RWPE1 (cell line): ENCODE measurements at regions of chr17 and their contacts with region 1.

Region 1: GRCh38 chr17:31130286-31131224 is 35.8 kb downstream of the NF1 start:
- DNase-seq: no peak
- H3K27ac ChIP-seq: peak overlapping the region; percentile 40
- CTCF ChIP-seq: no peak

Region 2: GRCh38 chr17:31085563-31085962 is 45.0 kb before region 1 on chr17:
- CTCF ChIA-PET with region 1: no interaction called
- POLR2A ChIA-PET with region 1: interaction called, 10 read pairs
- DNase-seq: no peak
- H3K27ac ChIP-seq: no peak overlapping the region
- CTCF ChIP-seq: no peak

Region 3: DNA sequence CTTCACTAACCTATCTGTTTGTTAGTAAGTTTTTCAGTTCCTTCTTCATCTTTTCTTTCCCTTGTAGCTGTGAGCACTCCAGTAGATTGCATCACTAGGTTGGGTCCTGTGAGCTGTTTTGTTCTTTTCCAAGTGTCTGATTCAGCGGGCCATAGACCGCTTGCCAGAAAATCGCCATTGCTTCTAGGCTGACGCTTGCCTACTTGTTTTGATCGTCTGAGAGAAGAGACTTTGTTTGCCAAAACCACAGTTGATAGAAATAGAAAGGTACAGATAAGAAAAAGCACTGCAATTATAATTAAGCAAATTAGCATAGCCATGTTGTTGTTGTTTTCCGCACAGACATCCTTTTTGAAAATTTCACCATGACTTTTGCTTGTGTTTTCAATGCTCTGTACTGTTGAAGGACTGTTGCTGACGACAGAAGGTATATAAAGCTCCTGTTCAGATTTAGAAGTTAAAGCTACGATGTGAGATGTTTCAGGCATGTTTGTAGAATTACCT is 187.8 kb after region 1 on chr17:
- CTCF ChIA-PET with region 1: no interaction called
- POLR2A ChIA-PET with region 1: no interaction called
- DNase-seq: peak; percentile 25
- H3K27ac ChIP-seq: no peak overlapping the region
- CTCF ChIP-seq: no peak